Posterior cingulate gyrus (tissue), 11 donors: ENCODE measurements at regions of chr4 and their contacts with region 1.

Region 1: GRCh38 chr4:54898656-54899340 is 226.6 kb downstream of the KDR start:
- DNase-seq: no peak

Region 2: DNA sequence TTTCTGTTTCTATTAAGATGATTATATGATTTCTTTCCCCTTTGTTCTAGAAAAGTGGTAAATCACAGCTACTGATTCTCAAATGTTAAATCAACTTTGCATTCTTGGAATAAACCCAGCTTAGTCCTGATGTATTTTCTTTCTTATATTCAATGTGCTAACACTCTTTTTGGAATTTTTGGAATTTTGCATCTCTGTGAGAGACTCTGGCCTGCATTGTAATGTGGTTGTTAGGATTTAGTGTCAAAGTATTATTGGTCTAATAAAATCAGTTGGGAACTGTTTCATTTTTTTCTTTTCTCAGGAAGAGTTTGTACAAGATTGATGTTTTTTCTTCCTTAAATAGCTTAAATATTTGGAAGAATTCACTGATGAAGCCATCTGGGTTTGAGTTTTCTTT is 131.4 kb before region 1 on chr4:
- intact Hi-C with region 1: no loop called
- DNase-seq: no peak

Region 3: DNA sequence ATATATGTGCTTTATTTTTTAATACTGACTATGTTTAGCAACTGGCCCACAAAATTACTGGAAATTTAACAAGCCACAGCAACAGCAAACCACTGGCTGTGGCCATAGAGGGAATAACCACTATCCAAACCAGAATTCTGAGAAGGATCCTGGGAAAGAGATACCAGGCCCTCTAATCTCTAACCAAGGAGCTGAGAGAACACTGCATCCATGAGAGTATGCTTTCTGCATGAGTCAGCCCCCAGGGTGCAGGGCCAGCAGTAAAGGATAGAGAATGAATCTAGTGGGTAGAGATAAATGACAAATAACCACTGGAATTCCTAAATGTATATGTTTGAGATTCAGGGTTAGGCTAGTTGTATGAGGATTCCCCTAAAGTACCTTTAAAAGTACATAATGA is 19.2 kb before region 1 on chr4:
- intact Hi-C with region 1: loop called (anchors 1 kb)
- DNase-seq: no peak